K562 (cell line): ENCODE measurements at regions of chr1 and their contacts with region 1.

Region 1: DNA sequence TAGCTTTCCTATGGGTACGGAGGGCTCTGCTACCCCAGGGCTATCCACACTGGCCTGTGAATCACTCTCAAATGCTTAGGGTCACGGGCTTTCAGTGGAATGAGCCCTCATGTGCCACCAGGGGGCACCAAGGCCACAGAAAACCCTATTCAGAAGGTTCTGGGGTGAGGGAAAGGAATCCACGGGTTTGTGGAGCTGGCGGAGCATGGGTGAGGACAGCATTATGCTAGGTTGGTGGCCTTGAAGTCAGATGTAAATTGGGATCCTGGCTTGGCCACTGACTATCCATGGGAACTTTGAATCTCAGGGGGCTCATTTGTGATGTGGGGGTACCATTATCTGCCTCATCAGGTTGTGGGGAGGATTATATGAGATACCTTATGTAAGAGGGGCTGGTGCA is 5.1 kb upstream of the LAMTOR5 start:
- DNase-seq: peak; percentile 84 to 94 (median 86)
- ATAC-seq: peak; percentile 90
- H3K4me3 ChIP-seq: no peak overlapping the region
- H3K27ac ChIP-seq: peak overlapping the region; percentile 11; the same call in 2 of the 3 replicates
- H3K4me1 ChIP-seq: peaks cover 0 to 40% of the 10 kb centered on the region in 2 experiments; a peak in 4 of 5 replicates
- H3K27me3 ChIP-seq: no peaks in the 10 kb centered on the region
- CTCF ChIP-seq: peak; percentile 92 to 98 (median 97)
- EP300 ChIP-seq: peak; percentile 21; the same call in 1 of the 2 replicates
- POLR2A ChIP-seq: no peak
- RAD21 ChIP-seq: peak; percentile 99

Region 2: GRCh38 chr1:110433803-110434202 is 21.2 kb after region 1 on chr1:
- CTCF ChIA-PET with region 1: interaction called, 4 read pairs
- POLR2A ChIA-PET with region 1: interaction called, 9 read pairs
- in situ Hi-C with region 1: no loop called
- intact Hi-C with region 1: loop called (anchors 1 kb)
- DNase-seq: peak; percentile 80 to 84 (median 81)
- ATAC-seq: peak; percentile 95
- H3K4me3 ChIP-seq: no peak overlapping the region
- H3K27ac ChIP-seq: no peak overlapping the region
- H3K4me1 ChIP-seq: peaks cover 10 to 23% of the 10 kb centered on the region in 2 experiments; a peak in 4 of 5 replicates
- H3K27me3 ChIP-seq: peaks cover 35 to 63% of the 10 kb centered on the region in 2 experiments
- CTCF ChIP-seq: peak; percentile 46 to 65 (median 59); a peak in 5 of 6 replicates
- EP300 ChIP-seq: no peak
- POLR2A ChIP-seq: no peak
- RAD21 ChIP-seq: peak; percentile 45 to 62; a peak in 3 of 4 replicates

Region 3: GRCh38 chr1:110455151-110455550 is 42.6 kb after region 1 on chr1:
- CTCF ChIA-PET with region 1: interaction called, 40 read pairs
- POLR2A ChIA-PET with region 1: interaction called, 8 read pairs
- in situ Hi-C with region 1: loop called (anchors 5 kb)
- intact Hi-C with region 1: loop called (anchors 1 kb)
- DNase-seq: peak; percentile 44 to 72 (median 58)
- ATAC-seq: peak; percentile 89
- H3K4me3 ChIP-seq: no peak overlapping the region
- H3K27ac ChIP-seq: no peak overlapping the region
- H3K4me1 ChIP-seq: peaks cover 0 to 4% of the 10 kb centered on the region in 2 experiments; a peak in 2 of 5 replicates
- H3K27me3 ChIP-seq: peaks cover 32 to 61% of the 10 kb centered on the region in 2 experiments
- CTCF ChIP-seq: peak; percentile 82 to 94 (median 91)
- EP300 ChIP-seq: no peak
- POLR2A ChIP-seq: no peak
- RAD21 ChIP-seq: peak; percentile 96 to 97

Region 4: GRCh38 chr1:110495926-110496600 is 83.5 kb after region 1 on chr1:
- CTCF ChIA-PET with region 1: interaction called, 15 read pairs
- POLR2A ChIA-PET with region 1: interaction called, 3 read pairs
- in situ Hi-C with region 1: no loop called
- intact Hi-C with region 1: loop called (anchors 1 kb)
- DNase-seq: peak; percentile 86 to 91 (median 90)
- ATAC-seq: peak; percentile 96
- H3K4me3 ChIP-seq: no peak overlapping the region
- H3K27ac ChIP-seq: no peak overlapping the region
- H3K4me1 ChIP-seq: no peaks in the 10 kb centered on the region
- H3K27me3 ChIP-seq: peaks cover 8 to 50% of the 10 kb centered on the region in 2 experiments; a peak in 3 of 5 replicates
- CTCF ChIP-seq: peak; percentile 94 to 99 (median 98)
- EP300 ChIP-seq: no peak
- POLR2A ChIP-seq: no peak
- RAD21 ChIP-seq: peak; percentile 94 to 95